ENCODE measurements at regions of chr12 and their contacts with region 1.

Region 1: DNA sequence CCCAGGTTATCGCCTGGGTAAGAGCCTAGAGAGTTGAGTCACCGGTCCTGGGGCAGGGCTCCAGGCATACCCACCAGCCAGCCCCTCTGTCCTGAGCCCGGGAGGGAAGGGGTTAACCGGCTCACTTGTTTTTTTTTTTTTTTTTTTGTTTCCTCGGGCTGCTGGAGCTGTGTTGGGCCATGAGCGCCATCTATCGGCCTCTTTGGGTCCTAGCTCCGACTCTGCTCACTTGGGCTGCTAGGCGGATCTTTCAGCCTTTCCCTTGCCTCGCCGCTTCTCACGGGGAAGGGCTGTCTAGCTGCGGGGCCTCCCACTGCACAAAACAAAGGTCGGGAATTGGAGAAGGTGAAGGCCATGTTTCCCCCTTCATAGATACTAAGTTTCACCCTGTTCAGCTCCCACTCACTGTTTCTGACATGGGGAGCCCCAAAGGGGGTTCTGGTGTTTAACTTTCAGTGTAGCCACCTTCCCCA is 2.8 kb upstream of the SMUG1 start:
- DNase-seq: peak; percentile 78 to 79
- H3K4me3 ChIP-seq: no peak overlapping the region
- H3K27ac ChIP-seq: no peak overlapping the region
- H3K4me1 ChIP-seq: peaks cover 8 to 9% of the 10 kb centered on the region in 2 donors
- H3K27me3 ChIP-seq: no peaks in the 10 kb centered on the region
- CTCF ChIP-seq: peak; percentile 48 to 91 (median 75)
- POLR2A ChIP-seq: no peak

Region 2: DNA sequence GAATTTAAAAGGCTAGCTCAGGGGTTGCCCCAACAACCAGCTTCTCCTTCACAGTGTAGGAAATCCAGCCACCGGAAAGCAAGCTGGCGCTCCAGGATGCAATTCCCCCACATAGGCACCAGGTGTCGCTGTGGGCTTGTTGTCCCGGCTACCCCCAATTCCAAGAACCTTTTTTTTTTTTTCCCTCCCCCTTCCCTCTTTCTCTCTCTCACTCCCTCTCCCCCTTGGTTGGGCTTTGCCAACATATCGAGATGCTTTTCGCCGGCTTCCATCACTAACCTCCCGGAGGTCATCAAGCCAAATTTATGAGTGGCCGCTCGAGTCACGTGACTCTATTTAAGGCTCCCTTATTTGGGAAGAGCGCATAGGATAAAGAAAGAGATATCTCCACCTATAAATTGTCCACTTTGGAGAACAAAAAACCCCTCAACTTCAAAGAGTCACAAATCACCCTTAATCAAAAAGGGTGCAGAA is 158.9 kb before region 1 on chr12 and contains the start of gene HOXC5:
- intact Hi-C with region 1: loop called (anchors 2 kb)
- DNase-seq: peak; percentile 68 to 70
- H3K4me3 ChIP-seq: no peak within 1 kb of the TSS
- H3K27ac ChIP-seq: no peak within 1 kb of the TSS
- H3K4me1 ChIP-seq: peaks cover 0 to 39% of the 10 kb centered on the region in 2 donors
- H3K27me3 ChIP-seq: peaks cover 64% of the 10 kb centered on the region
- CTCF ChIP-seq: peak; percentile 77 to 98 (median 90)
- POLR2A ChIP-seq: no peak
- total RNA-seq, gene HOXC5: 0.27 TPM in 1 of 4 donors, not detected in the others

Region 3: DNA sequence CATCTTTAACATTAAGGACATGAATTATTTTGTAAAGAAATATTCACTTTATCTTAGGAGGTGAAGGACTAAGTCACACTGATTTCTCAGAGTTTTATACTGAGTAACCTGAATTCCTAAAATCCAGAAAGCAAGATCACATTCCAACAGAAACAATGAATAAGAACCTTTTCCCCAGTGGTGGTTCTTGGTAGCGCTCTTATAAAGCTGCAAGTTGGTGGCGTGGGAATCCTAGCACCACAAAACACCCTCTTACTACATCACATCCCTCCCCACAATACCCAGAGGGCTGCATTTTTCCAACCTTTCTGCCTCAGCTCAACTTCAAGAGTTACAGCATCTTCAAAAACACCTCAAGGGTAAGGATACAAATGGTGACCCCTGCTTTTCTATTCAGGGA is 41.2 kb after region 1 on chr12:
- intact Hi-C with region 1: no loop called
- DNase-seq: no peak
- H3K4me3 ChIP-seq: no peak overlapping the region
- H3K27ac ChIP-seq: no peak overlapping the region
- H3K4me1 ChIP-seq: peaks cover 14 to 16% of the 10 kb centered on the region in 2 donors
- H3K27me3 ChIP-seq: no peaks in the 10 kb centered on the region
- CTCF ChIP-seq: no peak
- POLR2A ChIP-seq: no peak

Measured in thyroid gland (tissue), 4 donors.